CD14-positive monocyte (primary cell): ENCODE measurements at regions of chr15 and their contacts with region 1.

Region 1: GRCh38 chr15:73697033-73697467 is 12.9 kb downstream of the CD276 start:
- DNase-seq: peak; percentile 47 to 80 (median 73)
- H3K4me3 ChIP-seq: no peak overlapping the region
- H3K4me3 Mint-ChIP-seq: peak overlapping the region in 1 of 2 donors; percentile 67
- H3K27ac ChIP-seq: no peak overlapping the region
- H3K27ac Mint-ChIP-seq: peak overlapping the region in 1 of 7 donors; percentile 11
- H3K4me1 ChIP-seq: peaks cover 22 to 25% of the 10 kb centered on the region in 2 donors
- H3K4me1 Mint-ChIP-seq: peaks cover 35% of the 10 kb centered on the region
- H3K27me3 ChIP-seq: peaks cover 28 to 53% of the 10 kb centered on the region in 2 donors
- H3K27me3 Mint-ChIP-seq: peaks cover 56 to 66% (median 62%) of the 10 kb centered on the region in 3 donors
- CTCF ChIP-seq: no peak

Region 2: DNA sequence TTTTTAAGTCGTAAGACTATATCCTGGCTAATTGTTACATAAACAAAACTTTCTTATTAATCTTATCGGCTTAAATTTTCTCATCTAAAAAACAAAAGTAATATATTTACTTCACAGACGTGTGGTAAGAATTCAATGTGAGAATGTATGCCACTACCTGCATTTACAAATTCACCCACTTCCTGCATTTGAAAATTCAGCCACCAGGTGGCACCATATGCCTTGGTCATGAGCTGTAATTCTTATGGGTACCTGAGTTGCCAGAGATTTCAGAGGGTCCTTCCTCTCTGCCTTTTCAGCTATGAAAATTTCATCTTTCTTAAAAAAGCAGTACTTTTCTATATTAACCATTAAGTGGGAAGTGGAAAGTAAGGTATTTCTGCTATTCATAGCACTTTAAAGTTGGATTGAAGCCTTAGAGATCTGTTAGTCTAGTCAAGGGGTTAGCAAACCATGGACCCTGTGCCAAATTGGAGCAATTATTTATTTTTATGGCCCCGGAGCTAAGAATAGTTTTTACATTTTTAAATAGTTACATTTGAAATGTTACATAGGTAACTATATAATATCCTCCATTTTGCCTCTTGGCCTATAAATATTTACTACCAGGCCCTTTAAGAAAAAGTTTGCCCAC is 456.1 kb before region 1 on chr15:
- intact Hi-C with region 1: loop called in 1 of 2 experiments (anchors 2 kb)
- DNase-seq: peak; percentile 39 to 58 (median 56)
- H3K4me3 ChIP-seq: no peak overlapping the region
- H3K4me3 Mint-ChIP-seq: no peak overlapping the region
- H3K27ac ChIP-seq: no peak overlapping the region
- H3K27ac Mint-ChIP-seq: no peak overlapping the region
- H3K4me1 ChIP-seq: no peaks in the 10 kb centered on the region
- H3K4me1 Mint-ChIP-seq: no peaks in the 10 kb centered on the region
- H3K27me3 ChIP-seq: peaks cover 7% of the 10 kb centered on the region in 2 donors
- H3K27me3 Mint-ChIP-seq: peaks cover 7 to 15% (median 8%) of the 10 kb centered on the region in 3 donors
- CTCF ChIP-seq: peak; percentile 89

Region 3: DNA sequence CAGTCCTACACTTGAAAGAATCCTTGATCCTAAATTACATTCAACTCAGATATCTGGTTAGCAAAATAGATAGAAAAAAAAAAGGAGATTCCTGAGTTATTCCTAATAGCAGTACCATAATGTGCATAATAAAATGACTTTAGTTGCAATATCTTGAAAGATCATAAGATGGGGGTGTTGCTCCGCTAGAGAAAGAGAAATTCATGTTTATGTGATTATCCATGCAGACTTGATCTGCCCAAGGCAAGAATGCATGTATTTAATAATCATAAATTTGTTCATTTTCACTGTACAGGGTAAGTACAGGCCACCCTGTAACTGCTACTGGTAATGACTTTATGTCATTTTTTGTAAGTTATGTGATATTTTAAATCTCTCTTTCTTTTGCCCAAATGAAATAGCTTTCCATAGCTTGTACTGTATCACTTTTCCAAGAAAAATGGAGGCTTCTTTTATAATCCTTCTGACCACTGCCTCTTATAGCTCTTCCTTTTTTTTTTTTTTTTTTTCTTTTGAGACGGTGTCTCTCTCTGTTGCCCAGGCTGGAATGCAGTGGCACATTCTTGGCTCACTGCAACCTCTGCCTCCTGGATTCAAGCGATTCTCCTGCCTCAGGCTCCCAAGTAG is 412.8 kb before region 1 on chr15:
- intact Hi-C with region 1: loop called in 1 of 2 experiments (anchors 5 kb)
- DNase-seq: peak in 2 of 3 donors; percentile 36 to 51
- H3K4me3 ChIP-seq: no peak overlapping the region
- H3K4me3 Mint-ChIP-seq: no peak overlapping the region
- H3K27ac ChIP-seq: no peak overlapping the region
- H3K27ac Mint-ChIP-seq: no peak overlapping the region
- H3K4me1 ChIP-seq: peaks cover 42 to 43% of the 10 kb centered on the region in 2 donors
- H3K4me1 Mint-ChIP-seq: peaks cover 43% of the 10 kb centered on the region
- H3K27me3 ChIP-seq: peaks cover 0 to 4% of the 10 kb centered on the region in 2 donors
- H3K27me3 Mint-ChIP-seq: peaks cover 6 to 15% (median 13%) of the 10 kb centered on the region in 3 donors
- CTCF ChIP-seq: peak; percentile 80

Region 4: DNA sequence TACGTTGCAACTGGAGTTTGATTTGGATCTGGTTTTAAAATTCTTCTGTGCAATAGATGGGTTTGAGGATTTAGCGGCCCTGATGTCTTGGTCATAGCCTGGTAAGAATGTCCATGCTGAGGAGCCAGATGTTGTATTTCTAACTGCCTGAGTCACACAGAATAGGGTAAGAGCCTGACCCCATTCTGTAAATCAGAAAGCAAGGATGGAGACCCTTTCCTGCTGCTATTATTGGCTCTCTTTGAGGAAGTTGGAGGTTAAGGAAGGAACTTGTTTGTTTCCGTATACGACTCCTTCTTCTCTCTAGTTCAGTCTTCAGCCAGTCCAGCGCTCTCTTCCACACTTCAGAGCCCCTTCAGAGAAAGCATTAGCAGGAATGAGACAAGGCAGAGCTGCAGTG is 393.4 kb before region 1 on chr15:
- intact Hi-C with region 1: loop called in 1 of 2 experiments (anchors 5 kb)
- DNase-seq: peak in 2 of 3 donors; percentile 36 to 40
- H3K4me3 ChIP-seq: peak overlapping the region; percentile 8 to 49 (median 10)
- H3K4me3 Mint-ChIP-seq: peak overlapping the region; percentile 60 to 83
- H3K27ac ChIP-seq: peak overlapping the region; percentile 2 to 45
- H3K27ac Mint-ChIP-seq: peak overlapping the region in 6 of 7 donors; percentile 38 to 88 (median 76)
- H3K4me1 ChIP-seq: peaks cover 45 to 53% of the 10 kb centered on the region in 2 donors
- H3K4me1 Mint-ChIP-seq: peaks cover 58% of the 10 kb centered on the region
- H3K27me3 ChIP-seq: no peaks in the 10 kb centered on the region
- H3K27me3 Mint-ChIP-seq: peaks cover under 1 to 8% (median 2%) of the 10 kb centered on the region in 3 donors
- CTCF ChIP-seq: no peak

Region 5: GRCh38 chr15:73560501-73561117 is 136.4 kb before region 1 on chr15:
- intact Hi-C with region 1: loop called (anchors 5 kb)
- DNase-seq: peak; percentile 25 to 49 (median 32)
- H3K4me3 ChIP-seq: no peak overlapping the region
- H3K4me3 Mint-ChIP-seq: no peak overlapping the region
- H3K27ac ChIP-seq: no peak overlapping the region
- H3K27ac Mint-ChIP-seq: no peak overlapping the region
- H3K4me1 ChIP-seq: peaks cover 18 to 23% of the 10 kb centered on the region in 2 donors
- H3K4me1 Mint-ChIP-seq: peaks cover 21% of the 10 kb centered on the region
- H3K27me3 ChIP-seq: no peaks in the 10 kb centered on the region
- H3K27me3 Mint-ChIP-seq: peaks cover 0 to 2% (median 0%) of the 10 kb centered on the region in 3 donors
- CTCF ChIP-seq: peak; percentile 65

Region 6: DNA sequence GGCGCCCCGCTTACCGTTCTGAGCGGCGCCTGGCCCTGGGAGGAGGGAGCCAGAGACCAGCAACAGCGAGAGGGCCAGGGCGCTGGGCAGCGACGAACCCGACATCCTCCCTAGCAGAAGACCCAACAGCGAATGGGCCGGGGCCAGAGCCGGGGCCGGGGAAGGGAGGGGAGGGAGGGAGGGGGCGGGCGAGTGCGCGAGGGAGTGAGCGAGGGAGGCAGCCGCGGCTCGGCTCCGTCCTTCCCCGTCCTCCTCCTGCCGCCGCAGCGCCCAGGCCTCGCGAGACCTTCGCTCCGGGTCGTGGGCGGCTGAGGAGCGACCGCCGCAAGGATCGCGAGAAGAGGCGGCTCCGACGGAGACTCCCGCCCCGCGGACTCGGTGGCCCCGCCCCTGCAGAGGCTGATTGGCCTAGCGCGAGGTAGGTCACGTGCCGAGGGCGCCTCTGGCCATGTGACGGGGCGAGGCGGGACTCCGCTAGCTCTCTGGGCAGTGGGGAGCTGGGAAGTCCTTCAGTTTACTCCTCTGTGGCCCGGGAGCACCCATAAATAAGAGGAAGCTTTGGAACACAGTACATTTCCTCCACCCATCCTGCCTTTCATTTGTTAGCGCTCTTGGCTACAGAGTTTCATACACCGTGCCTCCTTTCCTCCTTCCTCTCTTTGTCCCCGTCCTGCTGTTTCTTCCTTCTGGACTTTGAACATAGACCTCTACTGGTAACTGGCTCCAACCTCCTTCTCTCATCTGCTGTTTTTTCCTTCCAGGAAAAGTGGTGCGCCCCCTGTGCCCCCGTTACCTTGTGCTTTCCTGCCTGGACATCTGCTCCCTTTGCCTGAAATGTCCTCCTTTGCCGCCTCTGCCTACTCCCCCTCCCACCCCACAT is 63.7 kb before region 1 on chr15 and contains the start of gene NPTN:
- intact Hi-C with region 1: loop called in 1 of 2 experiments (anchors 5 kb)
- DNase-seq: peak; percentile 97 to 99 (median 98)
- H3K4me3 ChIP-seq: peak within 1 kb of the TSS; percentile 79 to 92 (median 89)
- H3K4me3 Mint-ChIP-seq: peak within 1 kb of the TSS; percentile 91 to 97
- H3K27ac ChIP-seq: peak within 1 kb of the TSS; percentile 77 to 81
- H3K27ac Mint-ChIP-seq: peak within 1 kb of the TSS; percentile 84 to 97 (median 93)
- H3K4me1 ChIP-seq: peaks cover 49 to 60% of the 10 kb centered on the region in 2 donors
- H3K4me1 Mint-ChIP-seq: peaks cover 63% of the 10 kb centered on the region
- H3K27me3 ChIP-seq: no peaks in the 10 kb centered on the region
- H3K27me3 Mint-ChIP-seq: peaks cover 4 to 7% (median 5%) of the 10 kb centered on the region in 3 donors
- CTCF ChIP-seq: no peak
- polyA plus RNA-seq, gene NPTN: 86.5 to 137 (median 88.0) TPM

Region 7: GRCh38 chr15:73786518-73786917 is 89.5 kb after region 1 on chr15:
- intact Hi-C with region 1: no loop called
- DNase-seq: no peak
- H3K4me3 ChIP-seq: no peak overlapping the region
- H3K4me3 Mint-ChIP-seq: no peak overlapping the region
- H3K27ac ChIP-seq: no peak overlapping the region
- H3K27ac Mint-ChIP-seq: no peak overlapping the region
- H3K4me1 ChIP-seq: no peaks in the 10 kb centered on the region
- H3K4me1 Mint-ChIP-seq: no peaks in the 10 kb centered on the region
- H3K27me3 ChIP-seq: no peaks in the 10 kb centered on the region
- H3K27me3 Mint-ChIP-seq: peaks cover 1 to 5% (median 4%) of the 10 kb centered on the region in 3 donors
- CTCF ChIP-seq: no peak